ENCODE measurements at regions of chr2 and their contacts with region 1.

Region 1: GRCh38 chr2:67393237-67393636 is 3.9 kb upstream of the ETAA1 start:
- DNase-seq: no peak
- CTCF ChIP-seq: no peak

Region 2: DNA sequence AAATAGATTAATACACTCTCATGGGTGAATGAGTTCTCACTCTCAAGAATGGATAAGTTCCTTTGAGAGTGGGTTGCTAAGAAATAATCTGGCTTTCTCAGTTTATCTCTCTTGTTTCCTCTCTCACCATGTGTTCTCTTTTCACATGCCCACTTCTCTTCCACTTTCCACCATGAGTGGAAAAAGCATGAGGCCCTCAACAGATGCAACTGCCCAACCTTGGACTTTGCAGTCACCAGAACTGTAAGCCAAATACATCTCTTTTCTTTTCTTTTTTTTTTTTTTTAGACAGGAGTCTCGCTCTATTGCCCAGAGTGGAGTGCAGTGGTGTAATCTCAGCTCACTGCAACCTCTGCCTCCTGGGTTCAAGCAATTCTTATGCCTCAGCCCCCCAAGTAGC is 14.2 kb before region 1 on chr2:
- CTCF ChIA-PET with region 1: interaction called, 10 read pairs
- POLR2A ChIA-PET with region 1: no interaction called
- DNase-seq: no peak
- CTCF ChIP-seq: no peak

Measured in GM10248 (cell line).